ENCODE measurements at regions of chr5 and their contacts with region 1.

Region 1: DNA sequence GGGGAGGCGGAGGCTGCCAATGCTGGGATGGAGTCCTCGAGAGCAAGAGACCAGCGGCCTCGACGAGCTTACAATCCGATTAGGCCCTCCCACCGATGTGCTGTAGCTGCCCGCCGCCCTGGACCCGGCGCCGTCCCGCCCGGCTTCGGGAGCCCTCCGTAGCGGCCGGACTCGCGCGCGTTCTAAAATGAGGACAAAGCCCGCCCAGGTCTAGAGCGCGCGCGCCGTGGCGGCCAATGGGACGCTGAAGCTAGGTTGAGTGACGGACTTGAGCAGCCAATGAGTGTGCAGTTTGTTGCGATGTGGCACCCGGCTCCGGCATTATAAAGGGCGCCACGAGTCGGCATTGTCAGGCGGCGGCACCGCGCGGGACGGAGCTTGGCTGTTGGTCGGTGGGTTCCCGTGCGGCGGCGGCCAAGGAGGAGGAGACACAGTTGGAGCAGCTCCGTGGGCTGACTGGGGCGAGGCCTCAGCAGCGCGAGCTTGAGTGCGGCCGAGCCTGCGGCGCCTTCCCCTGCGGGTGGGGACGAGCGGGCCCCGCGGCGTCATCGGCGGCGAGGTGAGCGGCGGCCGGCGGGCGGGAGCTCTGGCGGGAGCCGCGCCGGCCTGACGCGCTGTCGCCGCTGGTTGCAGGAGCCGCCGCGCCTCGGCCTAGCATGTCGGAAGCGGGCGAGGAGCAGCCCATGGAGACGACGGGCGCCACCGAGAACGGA is at the start of gene HNRNPAB:
- DNase-seq: peak; percentile 95
- ATAC-seq: peak; percentile 80
- H3K4me3 Mint-ChIP-seq: peak within 1 kb of the TSS; percentile 95
- H3K27ac Mint-ChIP-seq: peak within 1 kb of the TSS; percentile 95
- H3K4me1 Mint-ChIP-seq: peaks cover 28% of the 10 kb centered on the region
- H3K27me3 Mint-ChIP-seq: no peaks in the 10 kb centered on the region
- CTCF ChIP-seq: no peak
- total RNA-seq, gene HNRNPAB: 118 and 120 TPM in 2 replicates

Region 2: GRCh38 chr5:178113199-178113787 is 91.0 kb before region 1 on chr5 and contains the start of gene N4BP3:
- CTCF ChIA-PET with region 1: no interaction called
- POLR2A ChIA-PET with region 1: interaction called, 8 read pairs
- intact Hi-C with region 1: loop called (anchors 2 kb)
- DNase-seq: peak; percentile 92
- ATAC-seq: peak; percentile 70
- H3K4me3 Mint-ChIP-seq: peak within 1 kb of the TSS; percentile 98
- H3K27ac Mint-ChIP-seq: peak within 1 kb of the TSS; percentile 94
- H3K4me1 Mint-ChIP-seq: peaks cover 65% of the 10 kb centered on the region
- H3K27me3 Mint-ChIP-seq: no peaks in the 10 kb centered on the region
- CTCF ChIP-seq: no peak
- total RNA-seq, gene N4BP3: 17.4 and 18.1 TPM in 2 replicates

Region 3: DNA sequence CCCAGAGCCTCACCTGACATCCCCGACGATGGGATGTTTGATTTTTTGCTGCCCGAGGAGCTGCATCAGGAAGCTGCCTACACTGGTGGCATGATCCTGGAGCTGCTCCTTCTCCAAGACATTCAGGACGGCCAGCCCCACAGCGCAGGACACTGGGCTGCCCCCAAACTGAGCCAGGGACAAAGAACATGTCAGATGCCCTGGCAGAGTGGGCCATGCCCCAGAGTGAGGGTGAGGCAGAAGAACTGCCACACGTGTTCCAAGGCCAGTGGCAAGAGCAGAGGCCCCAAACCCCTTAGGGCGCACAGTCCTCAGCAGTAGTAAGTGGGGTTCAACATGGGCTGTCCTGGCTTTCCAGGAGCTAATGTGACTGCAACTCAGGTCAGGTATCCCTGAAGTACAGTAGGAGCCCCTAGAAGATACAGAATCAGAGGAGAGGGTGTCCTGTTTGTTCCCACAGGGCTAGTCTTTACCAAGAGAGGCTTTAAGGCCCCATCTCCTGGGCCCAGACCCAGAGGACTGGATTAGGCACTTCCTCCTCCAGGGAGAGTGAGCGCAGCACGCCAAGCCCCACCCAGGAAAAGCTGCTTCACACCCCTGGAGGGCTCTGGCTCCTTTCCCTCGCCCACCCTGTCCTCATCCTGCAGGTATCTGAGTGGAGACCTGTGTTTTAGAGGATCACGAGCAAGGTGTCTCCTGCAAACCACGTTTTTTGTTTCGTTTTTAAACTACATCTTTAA is 11.1 kb after region 1 on chr5:
- CTCF ChIA-PET with region 1: no interaction called
- POLR2A ChIA-PET with region 1: interaction called, 13 read pairs
- intact Hi-C with region 1: no loop called
- DNase-seq: no peak
- ATAC-seq: no peak
- H3K4me3 Mint-ChIP-seq: no peak overlapping the region
- H3K27ac Mint-ChIP-seq: peak overlapping the region; percentile 18
- H3K4me1 Mint-ChIP-seq: peaks cover 13% of the 10 kb centered on the region
- H3K27me3 Mint-ChIP-seq: no peaks in the 10 kb centered on the region
- CTCF ChIP-seq: no peak

Region 4: GRCh38 chr5:178241231-178241663 is 36.9 kb after region 1 on chr5:
- CTCF ChIA-PET with region 1: no interaction called
- POLR2A ChIA-PET with region 1: interaction called, 10 read pairs
- intact Hi-C with region 1: no loop called
- DNase-seq: no peak
- ATAC-seq: peak; percentile 57
- H3K4me3 Mint-ChIP-seq: peak overlapping the region; percentile 66
- H3K27ac Mint-ChIP-seq: peak overlapping the region; percentile 90
- H3K4me1 Mint-ChIP-seq: peaks cover 45% of the 10 kb centered on the region
- H3K27me3 Mint-ChIP-seq: no peaks in the 10 kb centered on the region
- CTCF ChIP-seq: no peak

Region 5: GRCh38 chr5:178257650-178258049 is 53.3 kb after region 1 on chr5:
- CTCF ChIA-PET with region 1: no interaction called
- POLR2A ChIA-PET with region 1: no interaction called
- intact Hi-C with region 1: no loop called
- DNase-seq: no peak
- ATAC-seq: no peak
- H3K4me3 Mint-ChIP-seq: no peak overlapping the region
- H3K27ac Mint-ChIP-seq: no peak overlapping the region
- H3K4me1 Mint-ChIP-seq: peaks cover 7% of the 10 kb centered on the region
- H3K27me3 Mint-ChIP-seq: no peaks in the 10 kb centered on the region
- CTCF ChIP-seq: no peak

Region 6: GRCh38 chr5:178428341-178428964 is 224.1 kb after region 1 on chr5:
- CTCF ChIA-PET with region 1: no interaction called
- POLR2A ChIA-PET with region 1: no interaction called
- intact Hi-C with region 1: no loop called
- DNase-seq: no peak
- ATAC-seq: no peak
- H3K4me3 Mint-ChIP-seq: no peak overlapping the region
- H3K27ac Mint-ChIP-seq: no peak overlapping the region
- H3K4me1 Mint-ChIP-seq: no peaks in the 10 kb centered on the region
- H3K27me3 Mint-ChIP-seq: no peaks in the 10 kb centered on the region
- CTCF ChIP-seq: no peak

Measured in activated B cell treated with CpG ODN at 0.5 μM for 24 hours (primary cell).